A673 (cell line): ENCODE measurements at regions of chr19 and their contacts with region 1.

Region 1: GRCh38 chr19:30682999-30683536 is 310.9 kb downstream of the ZNF536 start:
- DNase-seq: peak; percentile 86
- H3K4me3 ChIP-seq: no peak overlapping the region
- H3K27ac ChIP-seq: no peak overlapping the region
- H3K4me1 ChIP-seq: peaks cover 28% of the 10 kb centered on the region
- H3K27me3 ChIP-seq: no peaks in the 10 kb centered on the region
- CTCF ChIP-seq: peak; percentile 98

Region 2: GRCh38 chr19:30669329-30670010 is 13.6 kb before region 1 on chr19:
- CTCF ChIA-PET with region 1: interaction called, 15 read pairs
- POLR2A ChIA-PET with region 1: no interaction called
- intact Hi-C with region 1: no loop called
- DNase-seq: peak; percentile 88
- H3K4me3 ChIP-seq: peak overlapping the region; percentile 47
- H3K27ac ChIP-seq: peak overlapping the region; percentile 71
- H3K4me1 ChIP-seq: peaks cover 11% of the 10 kb centered on the region
- H3K27me3 ChIP-seq: no peaks in the 10 kb centered on the region
- CTCF ChIP-seq: peak; percentile 98

Region 3: DNA sequence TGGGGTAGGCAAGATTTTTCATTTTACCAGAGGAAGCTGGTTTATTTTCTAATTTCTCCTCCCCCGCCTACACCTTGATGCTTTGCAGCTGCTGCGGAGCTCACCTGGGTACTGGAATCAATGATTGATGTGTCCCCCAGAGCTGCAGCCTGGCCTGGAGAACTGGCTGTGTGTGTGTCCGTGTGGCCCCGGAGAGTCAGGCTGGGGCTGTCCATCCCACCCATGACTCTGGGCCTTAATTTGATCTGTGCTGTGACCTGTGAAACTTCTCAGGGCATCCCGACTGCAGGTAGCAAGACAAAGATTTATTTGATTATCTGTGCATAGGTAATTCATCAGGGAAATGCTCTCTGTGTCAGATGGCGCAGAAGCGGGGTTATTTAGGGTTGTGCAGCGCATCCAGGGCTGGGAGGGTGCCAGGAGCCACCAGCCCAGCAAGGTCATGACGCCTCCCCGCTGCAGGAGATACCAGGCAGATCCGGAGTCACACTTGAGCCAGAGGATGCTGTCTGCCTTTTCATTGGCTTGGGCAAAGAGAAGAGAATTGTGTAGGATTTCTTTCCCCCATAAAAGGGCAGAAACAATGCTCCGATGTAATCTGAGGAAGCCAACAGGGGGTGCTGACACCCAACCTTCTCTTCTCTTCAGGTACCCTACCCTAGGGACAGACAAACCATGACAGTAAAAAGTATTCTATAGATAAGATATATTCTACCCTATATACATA is 319.6 kb after region 1 on chr19:
- CTCF ChIA-PET with region 1: interaction called, 3 read pairs
- POLR2A ChIA-PET with region 1: no interaction called
- intact Hi-C with region 1: loop called (anchors 5 kb)
- DNase-seq: no peak
- H3K4me3 ChIP-seq: no peak overlapping the region
- H3K27ac ChIP-seq: peak overlapping the region; percentile 88
- H3K4me1 ChIP-seq: peaks cover 12% of the 10 kb centered on the region
- H3K27me3 ChIP-seq: no peaks in the 10 kb centered on the region
- CTCF ChIP-seq: peak; percentile 33; the same call in 1 of the 2 replicates

Region 4: GRCh38 chr19:31548941-31549340 is 865.9 kb after region 1 on chr19:
- CTCF ChIA-PET with region 1: no interaction called
- POLR2A ChIA-PET with region 1: no interaction called
- intact Hi-C with region 1: loop called (anchors 10 kb)
- DNase-seq: peak; percentile 42
- H3K4me3 ChIP-seq: no peak overlapping the region
- H3K27ac ChIP-seq: no peak overlapping the region
- H3K4me1 ChIP-seq: peaks cover 5% of the 10 kb centered on the region
- H3K27me3 ChIP-seq: no peaks in the 10 kb centered on the region
- CTCF ChIP-seq: peak; percentile 65

Region 5: DNA sequence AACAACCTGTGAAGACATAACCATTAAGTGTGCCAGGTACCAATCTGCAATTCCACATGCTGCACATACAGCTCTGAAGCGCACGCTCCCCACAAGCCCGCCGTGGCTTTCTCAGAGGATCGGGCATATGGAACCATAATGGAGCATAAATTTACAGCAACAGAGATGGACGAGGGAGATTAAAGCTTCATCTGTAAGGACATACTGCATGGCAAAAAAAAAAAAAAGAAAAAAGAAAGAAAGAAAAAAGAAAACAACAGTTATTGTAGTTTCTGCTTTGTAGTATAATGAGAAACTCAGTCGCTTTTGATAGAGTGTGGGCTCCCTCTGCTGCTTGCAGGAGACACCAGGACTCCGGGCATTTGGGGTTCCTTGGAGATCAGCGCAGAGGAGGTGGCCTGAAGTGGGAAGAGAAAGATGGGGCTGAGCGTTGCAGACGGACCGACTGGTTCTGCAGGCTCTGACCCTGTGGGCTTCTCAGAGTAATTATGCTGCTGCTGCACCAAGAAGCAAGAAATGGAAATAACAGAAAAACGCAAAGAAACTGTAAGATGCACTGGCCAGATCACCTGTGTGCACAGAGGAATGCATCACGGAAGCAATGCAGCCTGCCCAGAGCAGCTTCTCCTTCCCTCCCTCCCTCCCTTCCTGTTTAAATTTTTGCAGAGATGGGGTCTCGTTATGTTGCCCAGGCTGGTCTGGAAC is 1887.2 kb after region 1 on chr19:
- CTCF ChIA-PET with region 1: no interaction called
- POLR2A ChIA-PET with region 1: no interaction called
- intact Hi-C with region 1: loop called (anchors 10 kb)
- DNase-seq: peak; percentile 74
- H3K4me3 ChIP-seq: no peak overlapping the region
- H3K27ac ChIP-seq: no peak overlapping the region
- H3K4me1 ChIP-seq: no peaks in the 10 kb centered on the region
- H3K27me3 ChIP-seq: no peaks in the 10 kb centered on the region
- CTCF ChIP-seq: peak; percentile 89